Psoas muscle (tissue), 8 donors: ENCODE measurements at regions of chr5 and their contacts with region 1.

Region 1: GRCh38 chr5:73215891-73216610 is 43.1 kb downstream of the TMEM174 start:
- DNase-seq: peak; percentile 79 to 88
- ATAC-seq: peak; percentile 98 to 100 (median 100)
- H3K4me3 ChIP-seq: peak overlapping the region; percentile 63
- H3K27ac ChIP-seq: no peak overlapping the region
- H3K4me1 ChIP-seq: no peaks in the 10 kb centered on the region
- H3K27me3 ChIP-seq: peaks cover 0 to 79% (median 5%) of the 10 kb centered on the region in 3 donors
- CTCF ChIP-seq: peak; percentile 87

Region 2: GRCh38 chr5:73027361-73027760 is 188.7 kb before region 1 on chr5:
- intact Hi-C with region 1: no loop called
- DNase-seq: no peak
- ATAC-seq: no peak
- H3K4me3 ChIP-seq: no peak overlapping the region
- H3K27ac ChIP-seq: no peak overlapping the region
- H3K4me1 ChIP-seq: peaks cover 4% of the 10 kb centered on the region
- H3K27me3 ChIP-seq: no peaks in the 10 kb centered on the region
- CTCF ChIP-seq: peak; percentile 20

Region 3: GRCh38 chr5:73160239-73160671 is 55.8 kb before region 1 on chr5:
- intact Hi-C with region 1: no loop called
- DNase-seq: no peak
- ATAC-seq: no peak
- H3K4me3 ChIP-seq: no peak overlapping the region
- H3K27ac ChIP-seq: no peak overlapping the region
- H3K4me1 ChIP-seq: no peaks in the 10 kb centered on the region
- H3K27me3 ChIP-seq: no peaks in the 10 kb centered on the region
- CTCF ChIP-seq: no peak

Region 4: GRCh38 chr5:73296772-73297171 is 80.7 kb after region 1 on chr5:
- intact Hi-C with region 1: loop called in 1 of 2 experiments (anchors 2 kb)
- DNase-seq: no peak
- ATAC-seq: no peak
- H3K4me3 ChIP-seq: no peak overlapping the region
- H3K27ac ChIP-seq: no peak overlapping the region
- H3K4me1 ChIP-seq: peaks cover 16% of the 10 kb centered on the region
- H3K27me3 ChIP-seq: peaks cover 2 to 64% (median 38%) of the 10 kb centered on the region in 3 donors
- CTCF ChIP-seq: no peak